Dendritic cell treated with granulocyte-macrophage colony-stimulating factor and Interleukin-4, amounts not matched to agents 40 ng/mL and 50 ng/mL, for 4 days (primary cell): ENCODE measurements at regions of chr1 and their contacts with region 1.

Region 1: GRCh38 chr1:158149577-158150269 is 31.0 kb upstream of the CD1D start:
- H3K4me3 Mint-ChIP-seq: peak overlapping the region; percentile 75
- H3K27ac Mint-ChIP-seq: peak overlapping the region; percentile 80
- H3K4me1 Mint-ChIP-seq: peaks cover 86% of the 10 kb centered on the region
- H3K27me3 Mint-ChIP-seq: no peaks in the 10 kb centered on the region

Region 2: GRCh38 chr1:158185770-158186705 is 36.3 kb after region 1 on chr1:
- intact Hi-C with region 1: loop called (anchors 5 kb)
- H3K4me3 Mint-ChIP-seq: no peak overlapping the region
- H3K27ac Mint-ChIP-seq: no peak overlapping the region
- H3K4me1 Mint-ChIP-seq: peaks cover 69% of the 10 kb centered on the region
- H3K27me3 Mint-ChIP-seq: peaks cover 4% of the 10 kb centered on the region